Calu3 (cell line): ENCODE measurements at regions of chr5 and their contacts with region 1.

Region 1: GRCh38 chr5:176573564-176574296 is 24.6 kb downstream of the CDHR2 start:
- DNase-seq: peak; percentile 86
- H3K4me3 Mint-ChIP-seq: no peak overlapping the region
- H3K27ac Mint-ChIP-seq: no peak overlapping the region
- H3K4me1 Mint-ChIP-seq: no peaks in the 10 kb centered on the region
- H3K27me3 Mint-ChIP-seq: no peaks in the 10 kb centered on the region
- CTCF ChIP-seq: peak; percentile 90

Region 2: DNA sequence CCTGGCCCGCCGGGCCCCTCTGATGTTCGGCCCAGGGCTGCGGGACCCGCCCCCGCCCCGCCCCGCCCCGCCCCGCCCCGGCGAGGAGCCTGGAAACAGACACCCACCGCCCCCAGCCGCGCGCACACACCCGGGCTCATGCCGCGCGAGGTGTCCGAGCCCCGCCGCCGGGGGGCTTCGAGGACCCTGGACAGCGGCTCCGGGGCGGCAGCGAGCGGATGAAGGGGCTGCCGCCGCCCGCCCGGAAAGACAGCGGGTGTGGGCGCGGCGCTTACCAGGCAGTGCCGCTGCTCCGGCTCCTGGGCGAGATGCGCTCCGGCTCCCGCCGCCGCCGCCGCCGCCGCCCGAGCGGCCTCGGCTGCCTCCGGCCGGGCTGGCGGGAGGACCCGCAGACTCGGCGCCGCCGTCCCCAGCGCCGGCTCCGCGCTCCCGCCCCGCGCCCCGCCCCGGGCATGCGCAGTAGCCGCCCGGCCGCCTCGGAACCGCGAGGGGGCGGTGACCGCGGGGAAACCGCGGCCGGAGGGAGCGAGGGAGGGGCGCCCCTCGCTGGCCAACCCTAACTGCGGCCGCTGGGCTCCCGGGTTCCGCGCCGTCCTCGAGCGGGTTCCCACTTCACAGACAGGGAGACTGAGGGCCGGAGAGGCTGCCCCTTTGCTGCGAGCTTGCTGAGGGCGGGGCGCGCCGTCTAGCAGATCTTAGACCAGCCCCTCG is 36.1 kb after region 1 on chr5 and contains the start of gene GPRIN1:
- CTCF ChIA-PET with region 1: no interaction called
- intact Hi-C with region 1: no loop called
- DNase-seq: peak; percentile 90
- H3K4me3 Mint-ChIP-seq: peak within 1 kb of the TSS; percentile 84
- H3K27ac Mint-ChIP-seq: peak within 1 kb of the TSS; percentile 29
- H3K4me1 Mint-ChIP-seq: peaks cover 19% of the 10 kb centered on the region
- H3K27me3 Mint-ChIP-seq: peaks cover 23% of the 10 kb centered on the region
- CTCF ChIP-seq: peak; percentile 50
- total RNA-seq, gene GPRIN1: 11.5 and 12.6 TPM in 2 replicates

Region 3: GRCh38 chr5:176647030-176647866 is 73.5 kb after region 1 on chr5 and contains the start of gene TSPAN17:
- CTCF ChIA-PET with region 1: interaction called, 3 read pairs
- intact Hi-C with region 1: loop called (anchors 2 kb)
- DNase-seq: peak; percentile 100
- H3K4me3 Mint-ChIP-seq: peak within 1 kb of the TSS; percentile 74
- H3K27ac Mint-ChIP-seq: peak within 1 kb of the TSS; percentile 30
- H3K4me1 Mint-ChIP-seq: peaks cover 19% of the 10 kb centered on the region
- H3K27me3 Mint-ChIP-seq: no peaks in the 10 kb centered on the region
- CTCF ChIP-seq: no peak
- total RNA-seq, gene TSPAN17: 66.3 and 67.7 TPM in 2 replicates

Region 4: GRCh38 chr5:176693477-176693851 is 119.7 kb after region 1 on chr5:
- CTCF ChIA-PET with region 1: no interaction called
- intact Hi-C with region 1: no loop called
- DNase-seq: peak; percentile 43
- H3K4me3 Mint-ChIP-seq: peak overlapping the region; percentile 66
- H3K27ac Mint-ChIP-seq: peak overlapping the region; percentile 73
- H3K4me1 Mint-ChIP-seq: peaks cover 29% of the 10 kb centered on the region
- H3K27me3 Mint-ChIP-seq: peaks cover 44% of the 10 kb centered on the region
- CTCF ChIP-seq: no peak

Region 5: GRCh38 chr5:176780792-176781375 is 207.2 kb after region 1 on chr5:
- CTCF ChIA-PET with region 1: no interaction called
- intact Hi-C with region 1: no loop called
- DNase-seq: no peak
- H3K4me3 Mint-ChIP-seq: no peak overlapping the region
- H3K27ac Mint-ChIP-seq: no peak overlapping the region
- H3K4me1 Mint-ChIP-seq: peaks cover 27% of the 10 kb centered on the region
- H3K27me3 Mint-ChIP-seq: peaks cover 61% of the 10 kb centered on the region
- CTCF ChIP-seq: no peak